B cell (primary cell): ENCODE measurements at regions of chr9 and their contacts with region 1.

Region 1: GRCh38 chr9:71604197-71605063 is 163.9 kb downstream of the CEMIP2 start:
- DNase-seq: peak; percentile 75
- ATAC-seq: peak; percentile 68
- H3K4me3 ChIP-seq: no peak overlapping the region
- H3K4me3 Mint-ChIP-seq: no peak overlapping the region
- H3K27ac ChIP-seq: no peak overlapping the region
- H3K27ac Mint-ChIP-seq: no peak overlapping the region
- H3K4me1 ChIP-seq: no peaks in the 10 kb centered on the region
- H3K4me1 Mint-ChIP-seq: no peaks in the 10 kb centered on the region
- H3K27me3 ChIP-seq: no peaks in the 10 kb centered on the region
- H3K27me3 Mint-ChIP-seq: no peaks in the 10 kb centered on the region
- CTCF ChIP-seq: peak; percentile 95

Region 2: GRCh38 chr9:71285191-71285656 is 319.2 kb before region 1 on chr9:
- CTCF ChIA-PET with region 1: interaction called, 3 read pairs
- POLR2A ChIA-PET with region 1: no interaction called
- intact Hi-C with region 1: loop called (anchors 10 kb)
- DNase-seq: peak; percentile 54
- ATAC-seq: peak; percentile 61
- H3K4me3 ChIP-seq: no peak overlapping the region
- H3K4me3 Mint-ChIP-seq: no peak overlapping the region
- H3K27ac ChIP-seq: no peak overlapping the region
- H3K27ac Mint-ChIP-seq: no peak overlapping the region
- H3K4me1 ChIP-seq: no peaks in the 10 kb centered on the region
- H3K4me1 Mint-ChIP-seq: no peaks in the 10 kb centered on the region
- H3K27me3 ChIP-seq: no peaks in the 10 kb centered on the region
- H3K27me3 Mint-ChIP-seq: no peaks in the 10 kb centered on the region
- CTCF ChIP-seq: peak; percentile 93

Region 3: DNA sequence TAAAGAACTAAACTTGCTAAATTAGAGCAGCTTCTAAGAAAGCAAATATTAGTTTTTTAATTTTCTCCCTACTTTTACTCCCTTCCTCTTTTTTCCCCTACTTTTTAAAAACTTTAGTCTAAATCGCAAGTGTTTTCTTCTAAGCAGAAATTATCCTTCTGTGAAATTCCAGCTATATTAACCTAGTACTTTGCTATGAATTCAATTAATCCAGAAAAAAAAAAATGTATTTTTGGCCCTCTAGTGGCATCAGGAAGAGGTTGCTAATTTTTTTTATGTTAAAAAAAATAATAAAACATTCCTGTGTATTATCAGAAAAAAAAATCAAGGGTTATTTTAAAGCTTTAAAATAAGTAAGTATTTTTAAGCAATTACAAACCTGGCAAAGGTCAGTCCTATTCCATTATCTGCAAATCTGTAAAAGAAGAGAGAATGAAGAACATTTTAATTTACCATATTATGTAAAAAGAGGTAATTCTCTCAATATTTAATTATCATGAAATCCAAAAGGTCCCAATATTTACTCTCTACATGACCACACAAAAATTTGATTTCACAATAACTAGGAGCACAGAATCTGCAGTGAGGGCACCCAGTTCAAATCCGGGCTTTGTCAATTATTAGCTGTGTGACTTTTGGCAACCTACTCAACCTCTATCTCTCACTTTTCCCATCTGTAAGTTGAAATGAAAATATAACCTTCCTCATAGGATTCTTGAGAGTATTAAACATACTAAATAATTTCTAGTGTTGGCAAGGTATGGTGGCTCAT is 111.9 kb after region 1 on chr9:
- CTCF ChIA-PET with region 1: interaction called, 19 read pairs
- POLR2A ChIA-PET with region 1: no interaction called
- intact Hi-C with region 1: loop called (anchors 1 kb)
- DNase-seq: no peak
- ATAC-seq: no peak
- H3K4me3 ChIP-seq: no peak overlapping the region
- H3K4me3 Mint-ChIP-seq: no peak overlapping the region
- H3K27ac ChIP-seq: no peak overlapping the region
- H3K27ac Mint-ChIP-seq: no peak overlapping the region
- H3K4me1 ChIP-seq: no peaks in the 10 kb centered on the region
- H3K4me1 Mint-ChIP-seq: no peaks in the 10 kb centered on the region
- H3K27me3 ChIP-seq: no peaks in the 10 kb centered on the region
- H3K27me3 Mint-ChIP-seq: no peaks in the 10 kb centered on the region
- CTCF ChIP-seq: peak; percentile 82

Region 4: DNA sequence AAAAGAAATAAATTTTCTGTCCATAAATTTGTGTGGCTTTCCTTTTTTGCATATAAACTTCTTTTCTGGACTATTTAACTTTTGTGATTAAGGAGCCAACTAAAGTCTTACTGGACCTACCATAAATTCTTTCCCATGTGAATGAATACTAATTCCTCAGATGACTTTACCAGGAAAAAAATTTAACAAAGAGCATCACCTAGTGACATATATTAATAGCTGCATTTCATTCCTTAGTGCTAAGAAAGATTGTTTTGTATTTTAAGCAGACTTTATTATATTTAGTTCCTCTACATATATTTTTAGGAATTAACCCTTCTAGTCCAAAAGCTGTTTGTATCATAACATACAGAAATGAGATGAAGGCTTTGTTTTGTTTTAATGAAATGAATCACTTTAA is 371.4 kb after region 1 on chr9:
- CTCF ChIA-PET with region 1: interaction called, 7 read pairs
- POLR2A ChIA-PET with region 1: no interaction called
- intact Hi-C with region 1: loop called (anchors 1 kb)
- DNase-seq: no peak
- ATAC-seq: no peak
- H3K4me3 ChIP-seq: no peak overlapping the region
- H3K4me3 Mint-ChIP-seq: no peak overlapping the region
- H3K27ac ChIP-seq: no peak overlapping the region
- H3K27ac Mint-ChIP-seq: no peak overlapping the region
- H3K4me1 ChIP-seq: no peaks in the 10 kb centered on the region
- H3K4me1 Mint-ChIP-seq: peaks cover 2% of the 10 kb centered on the region
- H3K27me3 ChIP-seq: no peaks in the 10 kb centered on the region
- H3K27me3 Mint-ChIP-seq: no peaks in the 10 kb centered on the region
- CTCF ChIP-seq: no peak

Region 5: GRCh38 chr9:72038890-72039410 is 434.5 kb after region 1 on chr9:
- CTCF ChIA-PET with region 1: interaction called, 14 read pairs
- POLR2A ChIA-PET with region 1: no interaction called
- intact Hi-C with region 1: no loop called
- DNase-seq: peak; percentile 72
- ATAC-seq: peak; percentile 84
- H3K4me3 ChIP-seq: no peak overlapping the region
- H3K4me3 Mint-ChIP-seq: peak overlapping the region; percentile 9
- H3K27ac ChIP-seq: no peak overlapping the region
- H3K27ac Mint-ChIP-seq: no peak overlapping the region
- H3K4me1 ChIP-seq: peaks cover 4 to 5% of the 10 kb centered on the region in 2 donors
- H3K4me1 Mint-ChIP-seq: peaks cover 5% of the 10 kb centered on the region
- H3K27me3 ChIP-seq: no peaks in the 10 kb centered on the region
- H3K27me3 Mint-ChIP-seq: peaks cover 20% of the 10 kb centered on the region
- CTCF ChIP-seq: peak; percentile 97